GM13976 (cell line): ENCODE measurements at regions of chr5 and their contacts with region 1.

Region 1: GRCh38 chr5:151051066-151051930 is 29.5 kb downstream of the TNIP1 start:
- DNase-seq: peak; percentile 83
- CTCF ChIP-seq: peak; percentile 80

Region 2: DNA sequence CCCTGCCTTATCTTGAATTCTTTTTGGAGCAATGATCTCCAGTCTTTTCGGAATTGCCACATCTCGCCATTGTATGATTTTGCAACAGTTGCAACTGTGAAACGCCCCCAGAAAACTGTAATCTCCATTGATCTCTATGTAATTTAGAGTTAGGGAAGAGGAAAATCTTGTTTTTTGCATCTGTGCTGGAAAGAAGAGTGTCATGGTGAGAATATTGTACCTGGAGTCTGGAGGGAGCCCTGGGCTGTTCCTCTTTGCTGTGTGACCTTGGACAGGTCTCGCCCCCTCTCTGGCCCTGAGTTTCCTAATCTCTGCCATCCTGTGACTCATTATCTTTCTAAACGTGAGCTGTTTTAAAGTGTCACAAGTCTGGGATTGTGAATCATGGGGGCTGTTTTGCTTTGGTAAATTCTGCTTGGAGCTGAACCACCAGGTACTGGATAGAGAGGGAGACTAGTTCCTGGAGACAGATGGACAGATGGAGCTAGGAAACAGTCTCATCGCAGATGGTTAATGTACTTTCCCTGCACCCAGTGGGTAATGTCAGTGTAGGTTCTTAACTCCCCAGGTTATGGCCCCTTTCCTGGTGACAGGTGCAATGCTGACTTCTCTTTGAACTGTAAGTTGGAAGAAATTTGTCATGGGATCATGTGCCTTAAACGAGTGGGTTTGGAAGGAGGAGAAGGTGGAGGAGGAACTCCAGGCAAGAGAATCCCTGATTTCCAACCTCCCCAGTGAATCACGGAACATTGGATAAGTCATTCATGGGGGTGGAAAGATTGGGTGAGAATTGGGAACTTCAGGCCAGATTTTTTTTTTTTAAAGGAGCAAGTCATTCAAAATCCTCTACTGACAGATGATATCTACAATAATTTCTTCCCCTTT is 1301.6 kb before region 1 on chr5:
- in situ Hi-C with region 1: no loop called
- DNase-seq: no peak
- CTCF ChIP-seq: no peak

Region 3: DNA sequence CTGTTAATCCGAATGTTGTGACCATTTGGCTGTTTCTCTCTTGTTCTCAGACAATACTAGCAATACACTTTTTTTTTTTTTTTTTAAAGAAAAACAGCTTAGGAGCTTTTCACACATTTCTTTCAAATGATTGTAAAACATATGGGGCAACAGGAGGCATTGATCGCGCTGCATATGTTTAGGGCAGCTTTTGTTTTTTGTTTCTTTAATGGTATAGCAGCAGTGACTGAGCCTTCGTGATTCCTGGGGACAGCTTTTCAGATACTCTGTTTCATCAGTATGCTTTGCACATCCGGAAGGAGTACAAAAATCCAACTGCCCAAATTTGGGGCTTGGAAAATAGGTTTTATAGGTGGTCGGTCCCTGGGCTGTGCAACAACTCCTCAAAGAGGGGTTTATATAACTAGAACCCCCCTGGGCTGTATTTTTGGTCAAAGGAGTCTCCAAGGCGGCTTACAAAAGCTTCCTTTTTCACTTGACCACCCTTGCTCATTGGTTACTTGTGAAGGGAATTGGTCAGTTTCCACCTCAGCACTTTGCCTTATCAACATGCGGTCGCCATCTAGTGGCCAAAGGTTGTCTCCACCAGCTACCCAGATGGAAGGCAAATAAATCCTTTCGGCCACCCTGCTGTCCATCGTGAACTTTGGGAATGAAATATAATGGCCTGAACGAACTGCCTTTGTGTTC is 1198.5 kb before region 1 on chr5:
- in situ Hi-C with region 1: no loop called
- DNase-seq: peak; percentile 74
- CTCF ChIP-seq: peak; percentile 84

Region 4: GRCh38 chr5:151115274-151115905 is 64.1 kb after region 1 on chr5:
- in situ Hi-C with region 1: loop called (anchors 5 kb)
- DNase-seq: peak; percentile 68
- CTCF ChIP-seq: peak; percentile 93